Heart right ventricle (tissue), 16 donors: ENCODE measurements at regions of chr4 and their contacts with region 1.

Region 1: DNA sequence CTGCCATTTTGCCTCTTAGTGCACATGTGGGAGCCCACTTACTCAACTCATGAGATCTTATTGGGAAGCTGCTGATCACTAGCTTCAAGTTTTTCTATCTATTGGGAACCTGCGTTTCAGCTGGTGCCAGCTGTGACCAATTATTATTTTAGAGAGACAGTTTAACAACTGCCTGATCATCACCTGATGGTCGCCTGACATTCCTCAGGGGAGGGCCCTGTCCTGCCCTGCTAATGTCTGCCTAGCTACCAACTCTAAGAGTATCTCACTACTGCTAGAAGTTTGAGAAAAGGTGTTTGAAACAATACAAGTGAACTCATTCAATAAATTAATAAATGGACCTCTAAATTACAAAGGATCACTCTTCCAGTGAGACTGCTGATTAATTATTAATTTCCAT is 95.5 kb downstream of the PCDH7 start:
- DNase-seq: no peak
- ATAC-seq: no peak
- H3K4me3 ChIP-seq: no peak overlapping the region
- H3K27ac ChIP-seq: no peak overlapping the region
- H3K4me1 ChIP-seq: peaks cover 0 to 9% (median 0%) of the 10 kb centered on the region in 9 donors
- H3K27me3 ChIP-seq: no peaks in the 10 kb centered on the region
- CTCF ChIP-seq: no peak

Region 2: GRCh38 chr4:30416547-30416946 is 399.1 kb before region 1 on chr4:
- intact Hi-C with region 1: no loop called
- DNase-seq: no peak
- ATAC-seq: no peak
- H3K4me3 ChIP-seq: no peak overlapping the region
- H3K27ac ChIP-seq: no peak overlapping the region
- H3K4me1 ChIP-seq: no peaks in the 10 kb centered on the region
- H3K27me3 ChIP-seq: no peaks in the 10 kb centered on the region
- CTCF ChIP-seq: no peak

Region 3: DNA sequence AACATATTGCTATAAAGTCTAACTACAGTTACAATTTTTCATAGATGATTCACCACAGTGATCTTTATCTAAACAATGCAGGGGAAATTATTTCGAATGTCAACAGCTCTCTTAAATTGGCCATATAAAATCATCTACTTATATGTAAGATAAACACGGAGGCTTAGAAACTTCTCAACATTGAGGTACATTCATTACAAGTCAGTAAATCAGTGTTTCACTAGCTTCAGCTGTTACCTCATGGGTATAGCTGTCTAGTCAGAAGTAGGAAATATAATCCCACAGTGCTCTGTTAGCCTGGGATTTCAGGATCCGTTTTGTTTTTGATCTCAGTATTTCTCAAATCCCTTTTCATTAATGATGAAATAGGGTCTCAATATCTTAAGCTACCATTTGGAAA is 52.3 kb before region 1 on chr4:
- intact Hi-C with region 1: loop called in 1 of 10 experiments (anchors 10 kb)
- DNase-seq: no peak
- ATAC-seq: no peak
- H3K4me3 ChIP-seq: no peak overlapping the region
- H3K27ac ChIP-seq: no peak overlapping the region
- H3K4me1 ChIP-seq: peaks cover 0 to 18% (median 0%) of the 10 kb centered on the region in 9 donors
- H3K27me3 ChIP-seq: no peaks in the 10 kb centered on the region
- CTCF ChIP-seq: no peak